ENCODE measurements at regions of chr15 and their contacts with region 1.

Region 1: DNA sequence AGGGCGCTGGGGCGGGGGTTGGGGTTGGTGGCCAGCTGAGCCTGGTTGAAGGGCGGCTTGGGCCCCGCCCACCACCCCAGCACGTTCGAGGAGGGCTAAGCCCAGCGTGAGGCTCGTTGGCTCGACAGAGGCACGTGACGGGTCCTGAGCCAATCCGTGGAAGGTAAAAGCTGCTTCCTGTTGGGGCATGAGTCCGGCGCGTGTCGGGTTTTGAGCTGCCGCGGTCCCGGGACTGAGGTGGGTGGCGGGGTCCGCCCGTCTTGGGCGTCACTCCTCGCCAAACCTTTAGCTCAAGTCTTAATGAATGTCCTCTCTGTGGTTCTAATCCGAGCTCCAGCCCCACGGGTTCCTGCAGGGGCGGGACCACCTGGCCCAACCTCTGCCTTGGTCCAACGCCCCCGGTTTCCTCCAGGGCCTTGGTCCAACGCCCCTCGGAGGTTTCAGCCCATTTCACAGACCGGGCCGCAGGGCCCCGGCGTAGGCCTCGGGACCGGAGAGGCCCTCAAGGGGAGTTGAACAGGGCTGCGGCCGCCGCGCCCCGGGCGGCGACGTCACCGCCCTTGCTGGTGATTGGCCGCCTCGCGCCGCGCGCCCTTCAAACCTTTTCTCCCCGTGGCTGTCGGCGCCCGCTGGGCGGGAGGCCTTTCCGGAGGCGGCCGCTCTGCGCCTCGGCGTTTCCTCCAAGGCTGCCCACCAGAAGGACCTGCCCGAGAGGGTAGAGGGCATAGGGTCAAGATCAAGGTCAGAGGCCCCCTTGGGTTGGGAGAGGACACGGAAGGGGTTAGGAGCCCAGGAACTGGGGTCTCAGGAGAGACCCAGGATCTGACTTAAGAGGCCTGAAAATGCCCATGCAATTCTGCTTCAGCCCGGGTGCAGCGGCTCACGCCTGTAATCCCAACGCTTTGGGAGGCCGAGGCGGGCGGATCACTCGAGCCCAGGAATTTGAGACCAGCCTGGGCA is at the start of gene RCCD1:
- DNase-seq: peak; percentile 97
- ATAC-seq: peak; percentile 94
- H3K4me3 Mint-ChIP-seq: peak within 1 kb of the TSS; percentile 86
- H3K27ac Mint-ChIP-seq: peak within 1 kb of the TSS; percentile 95
- H3K4me1 Mint-ChIP-seq: peaks cover 21% of the 10 kb centered on the region
- H3K27me3 Mint-ChIP-seq: no peaks in the 10 kb centered on the region
- total RNA-seq, gene RCCD1: 35.4 to 50.1 TPM

Region 2: DNA sequence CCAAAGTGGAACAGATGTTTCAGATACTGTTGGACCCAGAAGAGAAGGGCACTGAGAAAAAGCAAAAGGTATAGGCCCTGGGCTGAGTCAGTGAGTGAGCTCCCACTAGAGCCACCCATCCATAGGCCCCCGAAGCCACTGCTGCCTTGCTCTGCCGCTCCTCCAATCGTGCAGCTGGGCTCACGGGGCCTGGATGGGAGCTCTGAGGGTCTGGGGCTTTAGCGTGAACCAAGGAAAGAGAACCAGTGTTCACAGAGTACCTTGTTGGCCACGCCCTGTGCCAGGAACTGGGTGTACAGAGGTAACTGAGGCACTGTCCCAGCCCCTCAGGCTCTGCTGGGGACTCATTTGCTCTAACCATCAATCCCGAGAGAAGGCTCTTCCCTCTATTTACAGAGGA is 15.2 kb before region 1 on chr15:
- CTCF ChIA-PET with region 1: interaction called, 101 read pairs
- DNase-seq: no peak
- ATAC-seq: no peak
- H3K4me3 Mint-ChIP-seq: no peak overlapping the region
- H3K27ac Mint-ChIP-seq: no peak overlapping the region
- H3K4me1 Mint-ChIP-seq: peaks cover 16% of the 10 kb centered on the region
- H3K27me3 Mint-ChIP-seq: no peaks in the 10 kb centered on the region

Region 3: DNA sequence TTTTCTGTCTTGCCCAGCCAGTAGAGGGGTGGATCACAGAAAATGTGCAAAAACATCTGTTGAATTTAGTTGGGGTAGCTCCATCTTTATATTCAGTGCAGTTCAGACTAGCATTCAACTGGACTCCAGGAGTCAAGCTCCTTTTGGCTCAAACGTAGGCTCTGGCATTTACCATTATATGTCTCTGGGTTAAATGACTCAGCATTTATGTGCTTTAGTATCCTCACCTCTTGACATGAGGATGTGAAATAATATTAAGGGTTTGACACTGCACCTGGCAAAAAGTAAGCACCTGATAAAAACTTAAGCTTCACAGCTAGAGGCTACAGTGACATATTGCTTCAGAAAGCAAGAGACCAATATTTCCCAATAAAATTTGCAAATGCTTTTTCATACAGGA is 24.6 kb after region 1 on chr15:
- CTCF ChIA-PET with region 1: interaction called, 21 read pairs
- DNase-seq: no peak
- ATAC-seq: no peak
- H3K4me3 Mint-ChIP-seq: no peak overlapping the region
- H3K27ac Mint-ChIP-seq: peak overlapping the region; percentile 45
- H3K4me1 Mint-ChIP-seq: peaks cover 27% of the 10 kb centered on the region
- H3K27me3 Mint-ChIP-seq: no peaks in the 10 kb centered on the region

Region 4: DNA sequence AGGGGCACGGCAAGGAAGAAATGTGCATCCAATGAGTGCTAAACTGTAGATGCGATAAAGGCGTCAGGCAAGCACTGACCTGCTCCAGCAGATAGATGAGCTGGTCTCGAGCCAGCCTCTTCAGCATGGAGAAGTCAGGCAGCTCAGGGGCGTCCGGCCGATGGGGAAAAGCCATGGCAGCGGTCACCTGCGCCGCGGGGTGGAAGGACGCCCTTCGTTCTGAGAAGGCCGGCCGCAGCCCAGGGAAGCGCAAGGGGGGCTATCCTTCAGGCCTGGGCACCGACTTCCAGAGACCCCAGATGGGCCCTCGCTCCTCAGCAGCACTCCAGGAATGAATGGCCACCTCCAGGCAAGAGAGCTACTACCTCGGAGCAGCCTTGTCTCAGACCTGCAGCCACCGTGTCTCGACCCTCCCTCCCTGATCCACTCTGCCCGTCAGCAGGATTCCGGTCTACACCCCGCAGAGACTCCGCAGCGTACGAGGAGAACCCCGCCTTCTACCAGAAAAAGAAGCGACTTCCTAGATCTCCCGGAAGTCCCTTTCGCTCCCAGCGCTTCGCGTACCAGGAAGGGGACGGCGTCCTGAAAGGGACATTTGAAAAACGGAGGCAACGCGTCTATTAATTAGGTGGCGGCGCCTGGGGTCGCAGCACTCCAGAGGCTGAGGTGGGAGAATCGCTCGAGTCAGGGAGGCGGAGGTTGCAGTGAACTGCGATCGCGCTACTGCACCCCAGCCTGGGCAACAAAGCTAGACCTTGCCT is 67.3 kb after region 1 on chr15 and contains the start of gene VPS33B:
- CTCF ChIA-PET with region 1: interaction called, 23 read pairs
- DNase-seq: peak; percentile 86
- ATAC-seq: peak; percentile 87
- H3K4me3 Mint-ChIP-seq: peak within 1 kb of the TSS; percentile 97
- H3K27ac Mint-ChIP-seq: peak within 1 kb of the TSS; percentile 85
- H3K4me1 Mint-ChIP-seq: peaks cover 39% of the 10 kb centered on the region
- H3K27me3 Mint-ChIP-seq: no peaks in the 10 kb centered on the region
- total RNA-seq, gene VPS33B: 19.5 to 24.1 TPM

Region 5: DNA sequence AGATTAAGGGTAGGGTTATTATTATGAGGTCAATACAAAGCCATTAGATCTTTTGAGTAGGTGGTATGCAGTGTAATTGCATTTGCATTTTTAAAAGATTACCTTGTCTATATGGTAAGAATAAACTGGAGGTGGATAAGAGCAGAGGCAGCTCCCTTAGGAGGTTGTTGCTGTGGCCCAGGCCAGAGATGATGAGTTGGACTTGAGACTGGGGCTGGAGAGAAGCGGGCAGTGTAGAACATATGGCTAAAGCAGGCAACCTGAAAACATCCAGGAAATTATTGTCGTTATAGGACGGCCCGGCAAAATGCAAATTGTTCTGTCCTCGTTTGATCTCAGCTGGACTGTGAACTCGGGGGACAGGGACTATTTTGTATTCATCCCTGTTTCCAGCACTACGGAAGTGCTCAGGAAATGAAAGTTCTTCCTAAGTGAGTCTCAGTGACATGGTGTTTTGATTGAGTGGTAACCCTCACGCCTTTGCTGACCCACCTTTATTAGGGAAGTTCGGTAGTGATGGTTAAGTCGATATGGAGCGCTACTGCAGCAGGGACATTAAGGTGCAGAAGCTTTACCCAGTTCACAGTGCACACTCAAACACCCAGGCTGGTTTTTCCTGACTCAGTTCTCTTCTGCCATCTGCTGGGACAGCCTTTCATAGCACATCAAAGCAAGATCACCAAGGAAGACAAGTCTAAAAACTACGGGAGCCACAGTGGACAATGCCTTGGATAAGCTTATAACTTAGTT is 94.6 kb after region 1 on chr15:
- CTCF ChIA-PET with region 1: interaction called, 28 read pairs
- DNase-seq: peak; percentile 79
- ATAC-seq: peak; percentile 92
- H3K4me3 Mint-ChIP-seq: no peak overlapping the region
- H3K27ac Mint-ChIP-seq: no peak overlapping the region
- H3K4me1 Mint-ChIP-seq: peaks cover 25% of the 10 kb centered on the region
- H3K27me3 Mint-ChIP-seq: peaks cover 40% of the 10 kb centered on the region

Measured in activated CD8-positive, alpha-beta memory T cell treated with anti-CD3 and anti-CD28 coated beads, Interleukin-2, amount 10 ng/mL, durations not matched to agents 7 days and 5 days (primary cell).